Naive thymus-derived CD4-positive, alpha-beta T cell (primary cell): ENCODE measurements at regions of chr6 and their contacts with region 1.

Region 1: GRCh38 chr6:26025894-26026832 is 61.1 kb upstream of the HFE start:
- DNase-seq: peak; percentile 82 to 98 (median 95)
- ATAC-seq: peak; percentile 60
- H3K4me3 ChIP-seq: peak overlapping the region; percentile 75
- H3K4me3 Mint-ChIP-seq: peak overlapping the region; percentile 81 to 99 (median 94)
- H3K27ac ChIP-seq: peak overlapping the region; percentile 94
- H3K27ac Mint-ChIP-seq: peak overlapping the region; percentile 93 to 100 (median 98)
- H3K4me1 ChIP-seq: peaks cover 11 to 22% of the 10 kb centered on the region in 2 donors
- H3K4me1 Mint-ChIP-seq: peaks cover 12 to 81% (median 50%) of the 10 kb centered on the region in 7 donors
- H3K27me3 ChIP-seq: no peaks in the 10 kb centered on the region
- H3K27me3 Mint-ChIP-seq: peaks cover 0 to 9% (median 0%) of the 10 kb centered on the region in 5 donors

Region 2: GRCh38 chr6:25192590-25193459 is 833.3 kb before region 1 on chr6:
- CTCF ChIA-PET with region 1: no interaction called
- POLR2A ChIA-PET with region 1: no interaction called
- intact Hi-C with region 1: no loop called
- DNase-seq: no peak
- ATAC-seq: no peak
- H3K4me3 ChIP-seq: no peak overlapping the region
- H3K4me3 Mint-ChIP-seq: no peak overlapping the region
- H3K27ac ChIP-seq: no peak overlapping the region
- H3K27ac Mint-ChIP-seq: no peak overlapping the region
- H3K4me1 ChIP-seq: no peaks in the 10 kb centered on the region
- H3K4me1 Mint-ChIP-seq: no peaks in the 10 kb centered on the region
- H3K27me3 ChIP-seq: no peaks in the 10 kb centered on the region
- H3K27me3 Mint-ChIP-seq: peaks cover 13 to 24% (median 19%) of the 10 kb centered on the region in 5 donors

Region 3: DNA sequence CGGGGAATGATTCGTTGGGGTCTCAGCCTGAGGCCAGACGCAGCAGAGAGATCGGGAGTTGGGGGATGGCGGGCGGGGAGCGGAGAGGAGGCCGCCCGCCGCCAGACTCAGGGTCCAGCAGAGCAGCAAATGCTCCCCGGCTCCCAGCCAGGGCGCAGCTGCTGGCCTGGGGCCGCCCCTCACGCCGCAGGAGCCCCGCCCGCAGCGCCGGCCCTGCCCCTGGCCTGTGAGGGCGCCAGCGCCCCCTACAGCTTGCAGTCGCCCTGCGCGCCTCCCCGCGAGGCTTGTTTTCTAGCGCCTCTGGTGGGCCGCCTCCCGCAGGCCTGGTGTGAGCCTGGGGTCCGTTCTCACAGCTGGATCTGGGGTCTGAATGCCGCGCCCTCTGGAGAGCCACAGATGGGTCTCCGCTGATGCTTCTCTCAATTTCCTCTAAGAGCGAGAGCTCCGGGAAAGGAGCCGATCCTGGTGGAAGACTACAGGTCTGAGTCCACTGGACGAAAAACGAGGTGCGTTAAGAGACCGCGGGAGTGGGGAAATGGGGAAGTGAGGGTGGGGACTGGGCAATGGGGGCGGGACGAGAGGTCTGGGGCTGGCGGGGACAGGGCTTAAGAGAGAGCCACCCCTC is 33.6 kb before region 1 on chr6:
- CTCF ChIA-PET with region 1: interaction called, 20 read pairs
- POLR2A ChIA-PET with region 1: interaction called, 65 read pairs
- intact Hi-C with region 1: no loop called
- DNase-seq: peak; percentile 83 to 98 (median 91)
- ATAC-seq: peak; percentile 99
- H3K4me3 ChIP-seq: peak overlapping the region; percentile 79
- H3K4me3 Mint-ChIP-seq: peak overlapping the region; percentile 91 to 98 (median 94)
- H3K27ac ChIP-seq: peak overlapping the region; percentile 73
- H3K27ac Mint-ChIP-seq: peak overlapping the region; percentile 86 to 98 (median 95)
- H3K4me1 ChIP-seq: no peaks in the 10 kb centered on the region
- H3K4me1 Mint-ChIP-seq: peaks cover 0 to 40% (median 24%) of the 10 kb centered on the region in 7 donors
- H3K27me3 ChIP-seq: no peaks in the 10 kb centered on the region
- H3K27me3 Mint-ChIP-seq: no peaks in the 10 kb centered on the region

Region 4: DNA sequence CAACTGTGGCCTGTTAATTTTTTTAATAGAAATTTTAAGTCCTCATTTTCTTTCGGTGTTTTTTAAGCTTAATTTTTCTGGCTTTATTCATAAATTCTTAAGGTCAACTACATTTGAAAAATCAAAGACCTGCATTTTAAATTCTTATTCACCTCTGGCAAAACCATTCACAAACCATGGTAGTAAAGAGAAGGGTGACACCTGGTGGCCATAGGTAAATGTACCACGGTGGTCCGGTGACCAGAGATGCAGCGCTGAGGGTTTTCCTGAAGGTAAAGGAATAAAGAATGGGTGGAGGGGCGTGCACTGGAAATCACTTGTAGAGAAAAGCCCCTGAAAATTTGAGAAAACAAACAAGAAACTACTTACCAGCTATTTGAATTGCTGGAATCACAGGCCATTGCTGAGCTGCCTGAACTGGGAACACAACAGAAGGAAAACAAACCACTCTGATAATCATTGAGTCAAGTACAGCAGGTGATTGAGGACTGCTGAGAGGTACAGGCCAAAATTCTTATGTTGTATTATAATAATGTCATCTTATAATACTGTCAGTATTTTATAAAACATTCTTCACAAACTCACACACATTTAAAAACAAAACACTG is 71.2 kb after region 1 on chr6:
- CTCF ChIA-PET with region 1: interaction called, 22 read pairs
- POLR2A ChIA-PET with region 1: interaction called, 78 read pairs
- intact Hi-C with region 1: loop called in 1 of 2 experiments (anchors 1 kb)
- DNase-seq: peak; percentile 23 to 75 (median 61)
- ATAC-seq: peak; percentile 92
- H3K4me3 ChIP-seq: no peak overlapping the region
- H3K4me3 Mint-ChIP-seq: no peak overlapping the region
- H3K27ac ChIP-seq: no peak overlapping the region
- H3K27ac Mint-ChIP-seq: no peak overlapping the region
- H3K4me1 ChIP-seq: no peaks in the 10 kb centered on the region
- H3K4me1 Mint-ChIP-seq: peaks cover 4 to 13% (median 8%) of the 10 kb centered on the region in 7 donors
- H3K27me3 ChIP-seq: no peaks in the 10 kb centered on the region
- H3K27me3 Mint-ChIP-seq: peaks cover 0 to 9% (median 0%) of the 10 kb centered on the region in 5 donors

Region 5: DNA sequence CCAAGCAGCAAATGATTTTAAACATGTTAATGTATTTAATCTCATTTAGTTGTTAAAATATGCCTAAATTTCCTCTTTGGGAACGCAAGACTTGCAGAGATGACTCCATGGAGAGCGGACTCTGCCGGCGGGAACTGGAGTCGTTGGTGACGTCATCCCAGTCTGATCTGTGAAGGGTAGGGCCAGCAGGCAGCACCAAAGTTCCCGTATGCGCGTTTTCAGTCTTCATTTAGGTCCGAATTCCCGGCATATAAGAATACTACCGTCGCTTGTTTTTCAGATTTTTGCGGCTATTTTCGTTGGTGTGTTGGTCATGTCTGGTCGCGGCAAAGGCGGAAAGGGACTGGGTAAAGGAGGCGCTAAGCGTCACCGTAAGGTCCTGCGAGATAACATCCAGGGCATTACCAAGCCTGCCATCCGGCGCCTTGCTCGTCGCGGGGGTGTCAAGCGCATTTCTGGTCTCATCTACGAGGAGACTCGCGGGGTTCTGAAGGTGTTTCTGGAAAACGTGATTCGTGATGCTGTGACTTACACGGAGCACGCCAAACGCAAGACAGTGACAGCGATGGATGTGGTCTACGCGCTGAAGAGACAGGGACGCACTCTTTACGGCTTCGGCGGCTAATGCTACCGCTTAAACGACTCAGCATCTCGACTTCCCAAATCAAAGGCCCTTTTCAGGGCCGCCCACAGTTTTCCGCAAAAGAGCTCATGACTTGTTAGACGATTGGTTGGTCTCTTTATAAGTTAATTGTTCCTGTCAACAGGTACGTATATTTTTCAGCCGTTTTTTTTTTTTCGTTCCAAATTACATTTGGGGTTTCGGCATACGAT is 178.4 kb after region 1 on chr6:
- CTCF ChIA-PET with region 1: no interaction called
- POLR2A ChIA-PET with region 1: interaction called, 292 read pairs
- intact Hi-C with region 1: no loop called
- DNase-seq: peak; percentile 67 to 95 (median 89)
- ATAC-seq: peak; percentile 72
- H3K4me3 ChIP-seq: peak overlapping the region; percentile 77
- H3K4me3 Mint-ChIP-seq: no peak overlapping the region
- H3K27ac ChIP-seq: peak overlapping the region; percentile 90
- H3K27ac Mint-ChIP-seq: no peak overlapping the region
- H3K4me1 ChIP-seq: peaks cover 20 to 23% of the 10 kb centered on the region in 2 donors
- H3K4me1 Mint-ChIP-seq: peaks cover 9 to 36% (median 26%) of the 10 kb centered on the region in 7 donors
- H3K27me3 ChIP-seq: no peaks in the 10 kb centered on the region
- H3K27me3 Mint-ChIP-seq: peaks cover 0 to 5% (median 0%) of the 10 kb centered on the region in 5 donors

Region 6: DNA sequence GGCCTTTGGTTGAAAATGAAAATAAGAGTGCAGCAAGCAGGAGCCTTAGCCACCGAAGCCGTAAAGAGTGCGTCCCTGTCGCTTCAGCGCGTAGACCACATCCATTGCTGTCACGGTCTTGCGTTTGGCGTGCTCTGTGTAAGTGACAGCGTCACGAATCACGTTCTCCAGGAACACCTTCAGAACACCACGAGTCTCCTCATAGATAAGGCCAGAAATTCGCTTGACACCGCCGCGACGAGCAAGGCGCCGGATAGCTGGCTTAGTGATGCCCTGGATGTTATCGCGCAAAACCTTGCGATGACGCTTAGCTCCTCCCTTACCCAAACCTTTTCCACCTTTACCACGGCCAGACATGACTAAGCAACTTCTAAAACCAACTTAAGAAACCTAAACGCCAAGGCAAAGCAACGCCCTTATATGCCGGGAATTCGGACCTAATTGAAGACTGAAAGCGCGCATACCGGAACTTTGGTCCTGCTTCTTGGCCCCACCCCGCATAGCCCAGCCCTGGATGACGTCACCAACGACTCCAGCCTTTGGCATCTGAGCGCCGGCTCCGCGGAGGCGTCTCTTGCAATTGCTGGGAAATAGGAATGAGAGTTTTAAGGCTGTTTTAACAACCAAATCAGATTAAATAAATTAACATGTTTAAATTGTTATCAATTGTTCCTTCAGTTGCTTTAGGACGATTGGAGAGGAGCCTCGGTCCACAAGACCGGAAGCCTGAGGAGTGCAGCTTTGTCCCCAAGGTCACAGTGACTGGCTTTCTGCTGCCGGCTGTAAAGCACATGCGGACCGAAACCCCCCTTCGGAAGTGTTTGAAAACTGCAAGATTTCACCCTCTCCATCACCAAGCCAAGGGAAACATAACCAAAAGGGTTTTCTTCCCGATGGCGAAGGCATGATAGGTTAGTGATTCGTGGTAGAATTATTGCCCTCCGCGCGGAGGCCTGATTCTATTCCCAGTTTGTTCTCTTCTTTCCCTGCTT is 259.3 kb after region 1 on chr6:
- CTCF ChIA-PET with region 1: no interaction called
- POLR2A ChIA-PET with region 1: interaction called, 13 read pairs
- intact Hi-C with region 1: no loop called
- DNase-seq: peak; percentile 72 to 97 (median 92)
- ATAC-seq: peak; percentile 91
- H3K4me3 ChIP-seq: peak overlapping the region; percentile 88
- H3K4me3 Mint-ChIP-seq: peak overlapping the region; percentile 86 to 96 (median 90)
- H3K27ac ChIP-seq: peak overlapping the region; percentile 91
- H3K27ac Mint-ChIP-seq: peak overlapping the region; percentile 91 to 100 (median 98)
- H3K4me1 ChIP-seq: peaks cover 0 to 8% of the 10 kb centered on the region in 2 donors
- H3K4me1 Mint-ChIP-seq: peaks cover 7 to 48% (median 33%) of the 10 kb centered on the region in 7 donors
- H3K27me3 ChIP-seq: no peaks in the 10 kb centered on the region
- H3K27me3 Mint-ChIP-seq: peaks cover 0 to 9% (median 5%) of the 10 kb centered on the region in 5 donors

Region 7: GRCh38 chr6:27479319-27480182 is 1453.4 kb after region 1 on chr6:
- CTCF ChIA-PET with region 1: no interaction called
- POLR2A ChIA-PET with region 1: interaction called, 11 read pairs
- intact Hi-C with region 1: loop called (anchors 2 to 10 kb)
- DNase-seq: peak; percentile 84 to 97 (median 95)
- ATAC-seq: peak; percentile 83
- H3K4me3 ChIP-seq: peak overlapping the region; percentile 95
- H3K4me3 Mint-ChIP-seq: no peak overlapping the region
- H3K27ac ChIP-seq: peak overlapping the region; percentile 97
- H3K27ac Mint-ChIP-seq: no peak overlapping the region
- H3K4me1 ChIP-seq: peaks cover 9 to 12% of the 10 kb centered on the region in 2 donors
- H3K4me1 Mint-ChIP-seq: peaks cover 0 to 9% (median 5%) of the 10 kb centered on the region in 7 donors
- H3K27me3 ChIP-seq: no peaks in the 10 kb centered on the region
- H3K27me3 Mint-ChIP-seq: peaks cover 0 to 17% (median 0%) of the 10 kb centered on the region in 5 donors

Region 8: GRCh38 chr6:27893059-27893835 is 1867.1 kb after region 1 on chr6:
- CTCF ChIA-PET with region 1: interaction called, 3 read pairs
- POLR2A ChIA-PET with region 1: interaction called, 49 read pairs
- intact Hi-C with region 1: loop called (anchors 1 to 5 kb)
- DNase-seq: peak; percentile 75 to 95 (median 92)
- ATAC-seq: peak; percentile 83
- H3K4me3 ChIP-seq: peak overlapping the region; percentile 72
- H3K4me3 Mint-ChIP-seq: no peak overlapping the region
- H3K27ac ChIP-seq: peak overlapping the region; percentile 82
- H3K27ac Mint-ChIP-seq: peak overlapping the region in 1 of 9 donors; percentile 97
- H3K4me1 ChIP-seq: peaks cover 4 to 20% of the 10 kb centered on the region in 2 donors
- H3K4me1 Mint-ChIP-seq: peaks cover 9 to 55% (median 30%) of the 10 kb centered on the region in 7 donors
- H3K27me3 ChIP-seq: no peaks in the 10 kb centered on the region
- H3K27me3 Mint-ChIP-seq: peaks cover 0 to 8% (median 0%) of the 10 kb centered on the region in 5 donors